ENCODE measurements at regions of chr6 and their contacts with region 1.

Region 1: GRCh38 chr6:11212625-11213024 is 19.8 kb downstream of the NEDD9 start:
- DNase-seq: peak; percentile 83
- H3K4me3 ChIP-seq: no peak overlapping the region
- H3K27ac ChIP-seq: peak overlapping the region; percentile 79 to 86 (median 80)
- H3K4me1 ChIP-seq: peaks cover 0 to 86% (median 72%) of the 10 kb centered on the region in 4 donors
- H3K27me3 ChIP-seq: no peaks in the 10 kb centered on the region
- CTCF ChIP-seq: no peak
- EP300 ChIP-seq: no peak
- POLR2A ChIP-seq: no peak

Region 2: GRCh38 chr6:11144393-11144851 is 68.2 kb before region 1 on chr6:
- intact Hi-C with region 1: no loop called
- DNase-seq: peak; percentile 85
- H3K4me3 ChIP-seq: no peak overlapping the region
- H3K27ac ChIP-seq: no peak overlapping the region
- H3K4me1 ChIP-seq: peaks cover 0 to 5% (median 0%) of the 10 kb centered on the region in 4 donors
- H3K27me3 ChIP-seq: no peaks in the 10 kb centered on the region
- CTCF ChIP-seq: peak; percentile 79 to 91 (median 84)
- EP300 ChIP-seq: no peak
- POLR2A ChIP-seq: no peak

Region 3: GRCh38 chr6:11231564-11232192 is 19.1 kb after region 1 on chr6:
- intact Hi-C with region 1: loop called (anchors 2 kb)
- DNase-seq: peak; percentile 87
- H3K4me3 ChIP-seq: peak overlapping the region; percentile 45 to 64 (median 57)
- H3K27ac ChIP-seq: peak overlapping the region; percentile 83 to 92 (median 89)
- H3K4me1 ChIP-seq: peaks cover 0 to 44% (median 23%) of the 10 kb centered on the region in 4 donors
- H3K27me3 ChIP-seq: no peaks in the 10 kb centered on the region
- CTCF ChIP-seq: no peak
- EP300 ChIP-seq: no peak
- POLR2A ChIP-seq: no peak

Region 4: DNA sequence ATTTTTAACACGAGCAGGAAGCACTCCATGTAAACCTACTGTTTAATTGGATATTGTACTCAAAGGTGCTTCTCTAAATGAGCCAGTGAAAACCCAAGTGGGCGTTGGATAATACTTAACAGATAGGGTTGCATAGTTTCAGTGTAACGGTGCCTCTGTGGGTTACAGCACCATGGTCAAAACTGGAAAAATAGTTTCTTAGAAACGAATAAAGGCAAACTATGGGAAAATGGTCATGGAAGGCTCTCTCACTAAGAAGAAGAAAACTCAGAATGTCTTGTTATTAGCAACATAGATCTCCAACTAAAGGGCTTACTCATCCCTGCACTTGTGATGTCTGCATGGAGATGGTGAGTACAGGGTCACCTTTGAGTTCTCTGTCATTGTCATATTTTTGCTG is 79.0 kb after region 1 on chr6:
- intact Hi-C with region 1: loop called (anchors 5 kb)
- DNase-seq: no peak
- H3K4me3 ChIP-seq: no peak overlapping the region
- H3K27ac ChIP-seq: peak overlapping the region in 1 of 4 donors; percentile 48
- H3K4me1 ChIP-seq: peaks cover 0 to 32% (median 9%) of the 10 kb centered on the region in 4 donors
- H3K27me3 ChIP-seq: no peaks in the 10 kb centered on the region
- CTCF ChIP-seq: no peak
- EP300 ChIP-seq: no peak
- POLR2A ChIP-seq: no peak